ENCODE measurements at regions of chr4 and their contacts with region 1.

Region 1: GRCh38 chr4:42690537-42690936 is 33.6 kb upstream of the ATP8A1 start:
- DNase-seq: no peak
- ATAC-seq: no peak
- H3K4me3 ChIP-seq: no peak overlapping the region
- H3K27ac ChIP-seq: no peak overlapping the region
- H3K4me1 ChIP-seq: no peaks in the 10 kb centered on the region
- H3K27me3 ChIP-seq: no peaks in the 10 kb centered on the region
- CTCF ChIP-seq: no peak
- EP300 ChIP-seq: no peak
- POLR2A ChIP-seq: no peak
- RAD21 ChIP-seq: no peak

Region 2: GRCh38 chr4:42678512-42678911 is 12.0 kb before region 1 on chr4:
- CTCF ChIA-PET with region 1: interaction called, 5 read pairs
- POLR2A ChIA-PET with region 1: interaction called, 3 read pairs
- RAD21 ChIA-PET with region 1: interaction called, 4 read pairs
- SMC1A ChIA-PET with region 1: interaction called, 18 read pairs
- in situ Hi-C with region 1: no loop called
- intact Hi-C with region 1: no loop called
- DNase-seq: no peak
- ATAC-seq: peak; percentile 62
- H3K4me3 ChIP-seq: no peak overlapping the region
- H3K27ac ChIP-seq: no peak overlapping the region
- H3K4me1 ChIP-seq: peaks cover 6% of the 10 kb centered on the region; the same call in 1 of the 2 replicates
- H3K27me3 ChIP-seq: no peaks in the 10 kb centered on the region
- CTCF ChIP-seq: no peak
- EP300 ChIP-seq: no peak
- POLR2A ChIP-seq: no peak
- RAD21 ChIP-seq: no peak

Region 3: DNA sequence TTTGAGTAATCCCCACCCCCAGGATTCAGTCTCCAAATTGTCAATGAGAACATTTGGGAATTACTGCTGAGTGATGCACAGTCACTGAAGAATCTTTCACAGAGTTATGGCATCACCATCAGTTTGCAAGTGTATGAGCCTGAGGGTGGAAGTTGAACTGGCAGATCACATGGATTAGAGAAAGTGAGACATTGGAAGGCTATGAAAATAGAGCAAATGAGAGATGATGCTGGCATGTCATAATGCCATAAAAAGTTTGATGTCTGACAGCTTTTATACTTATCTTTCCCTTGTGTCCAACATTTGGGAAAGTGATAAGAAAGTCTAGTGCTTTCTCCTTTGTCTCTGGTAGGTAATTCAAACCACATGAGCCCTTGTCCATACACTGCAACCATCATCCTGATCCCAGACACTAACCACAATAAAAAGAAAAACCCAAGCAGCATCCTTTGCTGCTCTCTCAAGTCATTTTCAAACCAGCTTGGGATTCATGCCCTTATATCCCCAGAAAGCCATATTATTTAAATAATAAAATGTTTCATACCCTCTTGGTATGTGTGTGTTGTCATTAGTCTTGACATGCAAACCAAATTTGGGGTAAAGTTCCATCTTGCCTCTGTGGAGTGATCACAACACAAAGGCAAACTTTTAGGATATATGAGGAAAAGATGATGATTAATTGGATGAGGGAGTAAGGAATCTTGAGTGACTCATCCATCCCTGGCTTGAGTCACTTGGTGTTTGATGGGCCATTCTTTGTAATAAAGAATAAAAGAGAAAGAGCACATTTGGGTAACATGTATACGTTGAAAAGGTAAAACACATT is 640.9 kb after region 1 on chr4:
- CTCF ChIA-PET with region 1: no interaction called
- POLR2A ChIA-PET with region 1: interaction called, 10 read pairs
- RAD21 ChIA-PET with region 1: no interaction called
- SMC1A ChIA-PET with region 1: no interaction called
- in situ Hi-C with region 1: no loop called
- intact Hi-C with region 1: no loop called
- DNase-seq: no peak
- ATAC-seq: no peak
- H3K4me3 ChIP-seq: no peak overlapping the region
- H3K27ac ChIP-seq: no peak overlapping the region
- H3K4me1 ChIP-seq: no peaks in the 10 kb centered on the region
- H3K27me3 ChIP-seq: no peaks in the 10 kb centered on the region
- CTCF ChIP-seq: no peak
- EP300 ChIP-seq: no peak
- POLR2A ChIP-seq: no peak
- RAD21 ChIP-seq: no peak

Measured in GM12878 (cell line).